ENCODE measurements at regions of chr9 and their contacts with region 1.

Region 1: DNA sequence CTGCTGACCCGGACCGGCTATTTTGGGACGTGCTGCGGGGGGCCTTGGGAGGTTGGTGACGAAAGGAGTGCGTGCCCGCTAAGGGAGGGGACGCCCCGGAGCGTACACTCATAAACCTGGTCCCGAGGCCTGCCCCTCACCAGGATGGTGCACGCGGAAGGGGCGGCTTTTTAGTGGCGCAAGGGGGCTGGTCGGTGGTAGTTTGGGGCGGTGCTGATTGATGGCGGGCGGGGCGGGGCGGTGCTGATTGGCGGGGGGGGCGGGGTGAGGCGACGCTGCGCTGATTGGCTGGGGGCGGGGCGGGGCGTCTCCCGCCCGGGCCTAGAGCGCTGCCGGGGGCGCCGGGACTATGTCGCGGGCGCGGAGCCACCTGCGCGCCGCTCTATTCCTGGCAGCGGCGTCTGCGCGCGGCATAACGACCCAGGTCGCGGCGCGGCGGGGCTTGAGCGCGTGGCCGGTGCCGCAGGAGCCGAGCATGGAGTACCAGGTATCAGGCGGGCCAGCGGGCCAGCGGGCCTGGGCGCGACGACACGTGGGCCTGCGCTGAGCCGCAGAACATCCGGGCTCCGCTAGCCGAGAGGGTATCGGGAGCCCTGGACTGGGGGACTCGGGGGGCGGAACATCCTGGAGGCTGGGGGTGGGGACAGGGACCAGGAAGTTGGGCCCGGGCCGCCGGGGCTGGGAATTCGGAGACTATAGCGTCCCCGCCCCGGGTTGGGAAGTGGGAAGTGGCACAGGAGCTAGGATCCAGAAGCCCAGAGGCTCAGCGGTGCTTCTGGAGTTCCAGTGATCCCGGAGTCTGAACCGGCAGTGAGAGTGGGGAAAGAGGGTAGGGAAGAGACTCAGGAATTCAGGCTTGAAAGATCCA is at the start of gene FPGS:
- DNase-seq: peak; percentile 78
- H3K4me3 Mint-ChIP-seq: peak within 1 kb of the TSS; percentile 96
- H3K27ac Mint-ChIP-seq: peak within 1 kb of the TSS; percentile 96
- H3K4me1 Mint-ChIP-seq: peaks cover 24% of the 10 kb centered on the region
- H3K27me3 Mint-ChIP-seq: no peaks in the 10 kb centered on the region
- total RNA-seq, gene FPGS: 116 and 137 TPM in 2 replicates

Region 2: GRCh38 chr9:127770905-127771569 is 31.8 kb before region 1 on chr9:
- intact Hi-C with region 1: no loop called
- DNase-seq: peak; percentile 98
- H3K4me3 Mint-ChIP-seq: peak overlapping the region; percentile 85
- H3K27ac Mint-ChIP-seq: peak overlapping the region; percentile 92
- H3K4me1 Mint-ChIP-seq: peaks cover 56% of the 10 kb centered on the region
- H3K27me3 Mint-ChIP-seq: no peaks in the 10 kb centered on the region

Region 3: DNA sequence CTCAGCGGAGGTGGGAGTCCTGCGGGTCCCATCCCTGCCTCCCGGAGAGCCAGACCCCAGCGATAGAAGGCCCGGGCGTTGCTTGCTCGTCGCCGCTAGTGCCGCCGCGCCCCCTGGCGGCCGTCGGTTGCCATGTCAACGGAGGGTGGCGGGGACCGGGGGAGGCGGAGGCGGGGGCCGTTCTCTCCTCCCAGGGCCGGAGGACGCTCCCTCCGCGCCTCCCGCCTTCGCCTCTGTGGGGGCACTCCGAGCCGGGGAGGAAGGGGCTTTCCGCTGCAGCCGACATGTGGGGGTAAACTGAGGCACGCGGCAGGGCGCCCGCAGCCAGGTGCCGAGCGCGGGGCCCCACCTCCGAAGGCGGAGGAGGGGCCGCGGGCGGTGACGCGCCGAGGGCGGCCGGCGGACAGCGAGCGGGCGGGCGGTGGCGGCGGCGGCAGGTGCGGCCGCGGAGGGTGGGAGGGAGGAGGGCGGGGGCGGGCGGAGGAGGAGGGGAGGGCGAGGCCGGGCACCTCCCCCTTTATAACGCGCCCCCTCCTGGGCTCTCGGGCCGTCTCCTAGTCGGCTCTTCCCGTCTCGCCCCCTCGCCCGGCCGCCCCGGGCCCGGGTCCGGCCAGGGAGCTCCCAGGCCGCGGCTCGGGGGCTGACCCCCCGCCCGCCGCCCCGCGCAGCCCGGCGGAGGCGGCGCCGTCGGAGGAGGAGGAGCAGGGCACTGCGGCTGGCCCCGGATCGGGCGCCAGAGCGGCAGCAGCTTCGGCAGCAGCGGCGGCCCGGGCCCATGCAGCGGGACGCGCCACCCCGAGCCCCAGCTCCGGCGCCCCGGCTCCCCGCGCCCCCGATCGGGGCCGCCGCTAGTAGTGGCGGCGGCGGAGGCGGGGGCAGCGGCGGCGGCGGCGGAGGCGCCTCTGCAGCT is 17.5 kb before region 1 on chr9:
- intact Hi-C with region 1: loop called (anchors 1 kb)
- DNase-seq: peak; percentile 88
- H3K4me3 Mint-ChIP-seq: peak overlapping the region; percentile 97
- H3K27ac Mint-ChIP-seq: peak overlapping the region; percentile 86
- H3K4me1 Mint-ChIP-seq: peaks cover 56% of the 10 kb centered on the region
- H3K27me3 Mint-ChIP-seq: no peaks in the 10 kb centered on the region

Region 4: GRCh38 chr9:127869310-127870152 is 66.7 kb after region 1 on chr9:
- intact Hi-C with region 1: loop called (anchors 1 kb)
- DNase-seq: peak; percentile 69
- H3K4me3 Mint-ChIP-seq: no peak overlapping the region
- H3K27ac Mint-ChIP-seq: no peak overlapping the region
- H3K4me1 Mint-ChIP-seq: peaks cover 12% of the 10 kb centered on the region
- H3K27me3 Mint-ChIP-seq: no peaks in the 10 kb centered on the region

Measured in activated T-helper 2 cell treated with anti-CD3 and anti-CD28 coated beads, Interferon-gamma antibody, Interleukin-2, Interleukin-4, amounts not matched to agents 10 μg/mL and 5 μg/mL and 100 μg/mL, durations not matched to agents 14 hours and 24 hours and 36 hours (primary cell).